Calu3 (cell line): ENCODE measurements at regions of chr4 and their contacts with region 1.

Region 1: DNA sequence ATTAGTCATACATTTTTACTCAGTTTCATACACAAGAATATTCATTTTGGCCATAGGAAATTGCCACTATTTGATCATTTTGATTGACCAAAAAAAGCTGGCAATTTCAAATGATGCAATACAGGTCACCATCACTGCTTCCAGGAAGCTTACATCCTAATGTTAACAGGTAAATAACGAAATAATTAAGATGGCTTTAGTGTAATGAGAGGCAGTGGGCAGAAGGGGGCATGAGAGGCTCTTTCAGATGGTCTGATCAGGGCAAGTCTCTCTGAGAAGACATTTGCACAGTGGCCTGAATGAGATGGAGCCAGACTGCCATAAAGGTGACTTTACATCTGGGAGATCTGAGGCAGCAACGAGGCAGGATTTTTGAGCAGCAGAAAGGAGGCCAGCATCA is 170.7 kb downstream of the SLIT2 start:
- DNase-seq: peak; percentile 65
- H3K4me3 Mint-ChIP-seq: no peak overlapping the region
- H3K27ac Mint-ChIP-seq: no peak overlapping the region
- H3K4me1 Mint-ChIP-seq: peaks cover 8% of the 10 kb centered on the region
- H3K27me3 Mint-ChIP-seq: no peaks in the 10 kb centered on the region
- CTCF ChIP-seq: peak; percentile 20

Region 2: GRCh38 chr4:20305976-20306375 is 116.4 kb before region 1 on chr4:
- CTCF ChIA-PET with region 1: no interaction called
- intact Hi-C with region 1: loop called (anchors 10 kb)
- DNase-seq: peak; percentile 15
- H3K4me3 Mint-ChIP-seq: no peak overlapping the region
- H3K27ac Mint-ChIP-seq: no peak overlapping the region
- H3K4me1 Mint-ChIP-seq: no peaks in the 10 kb centered on the region
- H3K27me3 Mint-ChIP-seq: no peaks in the 10 kb centered on the region
- CTCF ChIP-seq: no peak

Region 3: DNA sequence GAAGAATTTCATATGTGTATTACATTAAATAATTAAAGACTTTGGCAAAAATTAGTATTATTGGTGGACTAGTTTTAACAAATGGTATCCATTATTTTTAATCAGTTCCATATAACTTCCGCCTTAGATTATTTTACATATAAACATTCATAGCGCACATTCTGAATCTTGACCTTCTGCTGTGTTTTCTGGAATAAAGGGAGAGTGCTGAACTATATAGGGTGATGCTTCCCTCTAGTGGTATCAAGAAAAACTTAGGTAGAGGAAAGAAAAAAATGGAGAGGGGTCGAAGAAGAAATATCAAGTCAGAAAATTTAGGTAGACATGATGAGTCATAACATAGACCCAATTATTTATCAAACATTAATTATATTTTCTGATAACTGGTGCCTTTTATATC is 122.2 kb after region 1 on chr4:
- CTCF ChIA-PET with region 1: no interaction called
- intact Hi-C with region 1: loop called (anchors 1 kb)
- DNase-seq: no peak
- H3K4me3 Mint-ChIP-seq: no peak overlapping the region
- H3K27ac Mint-ChIP-seq: no peak overlapping the region
- H3K4me1 Mint-ChIP-seq: no peaks in the 10 kb centered on the region
- H3K27me3 Mint-ChIP-seq: no peaks in the 10 kb centered on the region
- CTCF ChIP-seq: no peak

Region 4: GRCh38 chr4:20615492-20616260 is 193.3 kb after region 1 on chr4:
- CTCF ChIA-PET with region 1: no interaction called
- intact Hi-C with region 1: no loop called
- DNase-seq: peak; percentile 6
- H3K4me3 Mint-ChIP-seq: no peak overlapping the region
- H3K27ac Mint-ChIP-seq: no peak overlapping the region
- H3K4me1 Mint-ChIP-seq: peaks cover 21% of the 10 kb centered on the region
- H3K27me3 Mint-ChIP-seq: no peaks in the 10 kb centered on the region
- CTCF ChIP-seq: no peak

Region 5: DNA sequence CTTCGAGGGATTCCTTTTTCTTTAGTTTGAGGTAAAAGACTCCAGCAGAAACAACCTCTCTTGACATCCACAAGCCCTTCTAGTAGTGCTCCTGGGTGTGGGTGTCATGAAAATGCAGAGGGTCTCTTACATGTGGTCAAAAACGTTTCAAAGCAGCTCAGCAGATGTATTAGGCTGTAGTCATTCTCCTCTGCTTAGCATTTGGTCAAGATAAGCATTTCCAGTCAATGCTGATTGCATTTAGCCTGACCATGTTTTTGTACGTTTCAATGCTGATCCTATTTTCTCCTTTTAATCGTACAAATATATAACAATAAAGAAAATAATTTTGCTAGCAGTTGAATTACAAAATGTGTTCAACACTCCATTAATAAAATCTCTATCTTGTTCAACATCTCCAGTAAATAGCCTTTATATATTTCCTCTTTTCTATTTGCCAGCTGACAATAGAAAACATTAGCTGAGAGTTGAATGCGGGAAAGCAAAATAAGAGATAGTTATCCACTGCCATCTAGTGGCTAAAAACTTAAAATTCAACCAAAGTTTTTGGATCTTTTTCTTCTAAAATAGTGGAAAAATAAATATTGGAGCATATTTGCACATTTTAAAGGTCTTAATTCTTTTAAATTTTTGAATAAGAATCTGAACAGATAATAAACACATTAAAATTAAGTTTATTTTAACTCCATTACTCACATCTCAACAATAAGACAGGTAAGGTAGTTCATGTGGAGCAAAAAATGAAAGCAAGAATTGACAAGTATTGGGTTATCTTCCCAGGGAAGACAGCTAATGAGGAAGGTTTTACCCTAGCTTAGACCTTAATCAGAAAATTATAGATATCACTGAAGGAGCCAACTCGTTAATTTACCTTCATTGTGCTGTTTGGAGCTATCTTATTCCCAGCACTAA is 262.7 kb after region 1 on chr4:
- CTCF ChIA-PET with region 1: interaction called, 3 read pairs
- intact Hi-C with region 1: loop called (anchors 1 kb)
- DNase-seq: no peak
- H3K4me3 Mint-ChIP-seq: no peak overlapping the region
- H3K27ac Mint-ChIP-seq: no peak overlapping the region
- H3K4me1 Mint-ChIP-seq: no peaks in the 10 kb centered on the region
- H3K27me3 Mint-ChIP-seq: peaks cover 28% of the 10 kb centered on the region
- CTCF ChIP-seq: no peak

Region 6: DNA sequence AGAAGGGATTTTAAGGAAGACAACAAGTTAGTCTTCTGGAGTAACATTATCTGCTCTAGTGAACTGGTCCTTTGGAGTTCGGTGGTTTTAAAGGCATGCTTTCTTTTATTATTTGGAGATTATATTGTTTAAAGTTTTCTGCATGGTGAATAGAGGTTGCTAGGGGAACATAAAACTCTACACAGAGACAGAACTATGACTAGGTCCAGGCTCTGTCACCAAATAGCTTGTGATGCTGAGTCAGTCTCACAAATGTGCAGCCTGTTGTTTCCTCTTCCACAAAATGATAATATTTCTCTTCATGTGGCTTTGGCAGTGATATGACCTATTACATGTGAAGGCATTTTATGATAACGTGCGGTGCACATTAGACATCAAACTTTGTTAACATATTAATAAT is 410.4 kb after region 1 on chr4:
- CTCF ChIA-PET with region 1: no interaction called
- intact Hi-C with region 1: no loop called
- DNase-seq: no peak
- H3K4me3 Mint-ChIP-seq: no peak overlapping the region
- H3K27ac Mint-ChIP-seq: no peak overlapping the region
- H3K4me1 Mint-ChIP-seq: no peaks in the 10 kb centered on the region
- H3K27me3 Mint-ChIP-seq: no peaks in the 10 kb centered on the region
- CTCF ChIP-seq: no peak

Region 7: GRCh38 chr4:21765810-21766407 is 1343.5 kb after region 1 on chr4:
- CTCF ChIA-PET with region 1: no interaction called
- intact Hi-C with region 1: loop called (anchors 5 kb)
- DNase-seq: peak; percentile 49
- H3K4me3 Mint-ChIP-seq: no peak overlapping the region
- H3K27ac Mint-ChIP-seq: no peak overlapping the region
- H3K4me1 Mint-ChIP-seq: peaks cover 18% of the 10 kb centered on the region
- H3K27me3 Mint-ChIP-seq: peaks cover 16% of the 10 kb centered on the region
- CTCF ChIP-seq: peak; percentile 46